HCT116 (cell line): ENCODE measurements at regions of chr16 and their contacts with region 1.

Region 1: GRCh38 chr16:47141773-47142485 is 1.8 kb downstream of the NETO2 start:
- DNase-seq: peak; percentile 85
- ATAC-seq: peak; percentile 82
- H3K4me3 ChIP-seq: peak overlapping the region; percentile 43 to 52
- H3K27ac ChIP-seq: no peak overlapping the region
- H3K4me1 ChIP-seq: peaks cover 8 to 44% of the 10 kb centered on the region in 2 experiments; a peak in 3 of 4 replicates
- H3K27me3 ChIP-seq: no peaks in the 10 kb centered on the region
- CTCF ChIP-seq: peak; percentile 93 to 97 (median 94)
- POLR2A ChIP-seq: no peak
- RAD21 ChIP-seq: peak; percentile 85

Region 2: DNA sequence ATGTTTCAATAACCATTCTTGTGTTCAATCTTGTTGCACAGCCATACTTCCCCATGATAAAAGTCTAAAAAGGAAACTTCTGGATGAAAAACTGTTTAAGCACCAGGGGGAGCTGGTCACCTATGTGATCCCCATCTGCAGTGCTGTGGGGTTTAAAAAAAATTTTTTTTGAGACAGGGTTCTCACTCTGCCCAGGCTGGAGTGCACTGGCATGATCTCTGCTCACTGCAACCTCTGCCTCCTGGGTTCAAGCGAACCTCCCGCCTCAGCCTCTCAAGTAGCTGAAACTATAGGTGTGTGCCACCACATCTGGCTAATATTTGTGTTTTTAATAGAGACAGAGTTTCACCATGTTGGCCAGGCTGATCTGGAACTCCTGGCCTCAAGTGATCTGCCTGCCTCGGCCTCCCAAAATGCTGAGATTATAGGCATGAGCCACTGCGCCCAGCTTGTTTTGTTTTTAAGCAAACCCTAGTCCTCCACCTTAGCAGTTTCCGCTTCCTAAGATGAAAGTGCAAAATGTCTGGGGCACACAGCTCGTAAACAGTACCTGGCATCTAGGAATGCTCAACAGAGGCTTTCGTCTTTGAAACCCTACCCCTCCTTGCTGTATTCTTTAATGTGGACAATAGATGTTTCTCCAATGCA is 193.9 kb before region 1 on chr16:
- CTCF ChIA-PET with region 1: interaction called, 3 read pairs
- POLR2A ChIA-PET with region 1: no interaction called
- RAD21 ChIA-PET with region 1: no interaction called
- intact Hi-C with region 1: loop called (anchors 10 kb)
- DNase-seq: peak; percentile 29
- ATAC-seq: peak; percentile 90
- H3K4me3 ChIP-seq: no peak overlapping the region
- H3K27ac ChIP-seq: no peak overlapping the region
- H3K4me1 ChIP-seq: no peaks in the 10 kb centered on the region
- H3K27me3 ChIP-seq: no peaks in the 10 kb centered on the region
- CTCF ChIP-seq: peak; percentile 63 to 75 (median 65)
- POLR2A ChIP-seq: no peak
- RAD21 ChIP-seq: peak; percentile 89

Region 3: GRCh38 chr16:48054881-48055601 is 913.1 kb after region 1 on chr16:
- CTCF ChIA-PET with region 1: interaction called, 6 read pairs
- POLR2A ChIA-PET with region 1: no interaction called
- RAD21 ChIA-PET with region 1: no interaction called
- intact Hi-C with region 1: loop called (anchors 10 kb)
- DNase-seq: peak; percentile 35
- ATAC-seq: peak; percentile 97
- H3K4me3 ChIP-seq: no peak overlapping the region
- H3K27ac ChIP-seq: no peak overlapping the region
- H3K4me1 ChIP-seq: peaks cover 0 to 5% of the 10 kb centered on the region in 2 experiments; a peak in 1 of 4 replicates
- H3K27me3 ChIP-seq: peaks cover 36% of the 10 kb centered on the region
- CTCF ChIP-seq: peak; percentile 37 to 93 (median 84); a peak in 5 of 6 replicates
- POLR2A ChIP-seq: no peak
- RAD21 ChIP-seq: peak; percentile 71

Region 4: DNA sequence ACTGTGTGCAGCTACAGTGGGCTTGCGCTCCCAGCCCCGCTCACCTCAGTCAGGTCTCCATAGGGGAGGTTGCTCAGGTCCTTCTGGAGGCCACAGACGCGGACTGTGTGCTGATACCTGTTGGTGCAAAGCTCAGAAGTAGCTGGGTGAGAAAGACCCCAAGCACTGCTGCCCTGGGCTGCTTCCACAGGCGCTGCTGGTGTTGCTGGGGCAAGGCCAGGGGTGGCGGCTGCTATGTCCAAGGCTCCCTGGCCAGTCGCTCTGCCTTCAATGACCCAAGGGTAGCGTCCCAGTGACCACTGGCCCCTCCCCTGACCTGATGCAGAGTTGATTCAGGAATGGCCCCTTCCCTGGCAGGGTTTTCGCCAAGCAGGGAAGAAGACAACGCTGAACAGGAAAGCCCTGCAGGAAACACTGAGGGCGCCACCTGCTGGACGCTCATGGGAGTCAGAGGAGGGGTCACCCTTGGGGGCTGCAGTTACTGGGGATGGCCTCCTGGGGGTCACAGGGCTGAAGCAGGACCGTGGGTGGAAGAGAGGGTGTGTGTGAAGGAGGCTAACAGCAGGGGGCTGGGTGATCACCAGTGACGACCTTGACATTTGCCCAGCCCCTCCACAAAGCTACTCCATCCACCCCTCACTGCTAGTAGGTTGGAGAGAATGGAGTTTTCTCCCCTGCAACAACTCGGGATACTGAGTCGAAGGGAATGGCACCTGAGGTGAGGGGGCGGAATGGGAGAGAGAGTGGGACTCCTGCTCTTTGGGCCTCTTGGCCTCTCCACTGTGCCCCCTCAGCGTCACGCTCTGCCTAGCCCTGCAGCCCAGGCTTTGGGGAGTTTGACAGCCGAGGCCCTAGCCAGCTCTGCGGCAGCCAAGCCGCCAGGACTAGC is 975.5 kb after region 1 on chr16:
- CTCF ChIA-PET with region 1: interaction called, 17 read pairs
- POLR2A ChIA-PET with region 1: interaction called, 3 read pairs
- RAD21 ChIA-PET with region 1: interaction called in 1 of 2 experiments, 7 read pairs
- intact Hi-C with region 1: loop called (anchors 2 kb)
- DNase-seq: peak; percentile 56
- ATAC-seq: peak; percentile 98
- H3K4me3 ChIP-seq: no peak overlapping the region
- H3K27ac ChIP-seq: no peak overlapping the region
- H3K4me1 ChIP-seq: peaks cover 0 to 9% of the 10 kb centered on the region in 2 experiments; a peak in 2 of 4 replicates
- H3K27me3 ChIP-seq: 0 out of 2 replicates have a peak, but pooled peaks cover 5% of the 10 kb centered on the region
- CTCF ChIP-seq: peak; percentile 90 to 99 (median 98)
- POLR2A ChIP-seq: no peak
- RAD21 ChIP-seq: peak; percentile 66

Region 5: GRCh38 chr16:48156790-48157209 is 1014.9 kb after region 1 on chr16:
- CTCF ChIA-PET with region 1: interaction called, 21 read pairs
- POLR2A ChIA-PET with region 1: no interaction called
- RAD21 ChIA-PET with region 1: no interaction called
- intact Hi-C with region 1: loop called (anchors 2 kb)
- DNase-seq: peak; percentile 62
- ATAC-seq: peak; percentile 81
- H3K4me3 ChIP-seq: no peak overlapping the region
- H3K27ac ChIP-seq: no peak overlapping the region
- H3K4me1 ChIP-seq: peaks cover 14 to 34% of the 10 kb centered on the region in 2 experiments
- H3K27me3 ChIP-seq: no peaks in the 10 kb centered on the region
- CTCF ChIP-seq: peak; percentile 74 to 96 (median 84)
- POLR2A ChIP-seq: no peak
- RAD21 ChIP-seq: peak; percentile 93